HepG2 (cell line): ENCODE measurements at regions of chr20 and their contacts with region 1.

Region 1: DNA sequence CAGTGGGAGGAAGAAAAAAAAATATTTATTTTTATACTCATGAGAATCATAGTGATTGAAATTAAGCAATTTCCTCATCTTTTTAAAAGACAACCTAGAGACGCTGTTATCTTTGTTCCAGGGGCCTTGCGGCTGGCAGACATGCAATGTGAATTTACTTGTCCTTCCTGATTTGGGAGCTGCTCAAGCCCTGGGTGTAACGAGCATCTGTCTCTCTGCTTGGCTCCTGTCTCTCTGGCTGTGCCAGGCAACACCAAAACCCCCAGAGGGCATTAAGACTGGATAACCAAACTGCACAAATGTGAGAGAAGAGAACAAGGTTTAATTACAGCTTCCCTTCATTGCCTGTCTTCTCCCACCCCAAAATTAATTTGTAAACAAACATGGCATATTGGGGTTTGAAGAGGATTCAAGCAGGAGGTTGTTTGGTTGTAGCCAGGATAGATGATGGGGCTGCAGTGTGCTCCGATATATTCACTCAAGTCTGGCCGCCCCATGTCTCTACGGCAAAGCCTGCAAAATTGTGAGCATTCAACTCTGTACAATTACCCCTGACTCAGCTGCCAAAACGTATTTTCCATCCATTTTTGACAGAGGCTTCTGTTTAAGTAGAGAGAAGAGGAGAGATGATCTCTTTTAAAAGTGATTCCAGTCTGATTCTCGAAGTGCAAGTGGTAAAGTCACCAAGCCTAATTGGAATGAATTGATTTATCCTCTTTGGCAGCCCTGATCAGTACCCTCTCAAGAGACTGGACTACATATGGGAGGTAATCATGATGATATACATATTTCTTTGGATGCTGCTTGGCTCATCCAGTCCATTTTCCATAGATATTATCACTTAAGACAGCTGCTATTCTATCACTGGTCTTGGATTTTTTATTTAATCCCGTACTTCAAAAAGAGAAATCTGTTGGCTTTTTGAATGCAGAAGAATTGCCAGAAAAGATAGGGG is 170.2 kb downstream of the SLC24A3 start:
- DNase-seq: no peak
- ATAC-seq: no peak
- H3K4me3 ChIP-seq: no peak overlapping the region
- H3K27ac ChIP-seq: no peak overlapping the region
- H3K4me1 ChIP-seq: no peaks in the 10 kb centered on the region
- H3K27me3 ChIP-seq: no peaks in the 10 kb centered on the region
- CTCF ChIP-seq: no peak
- EP300 ChIP-seq: no peak
- POLR2A ChIP-seq: no peak
- RAD21 ChIP-seq: no peak

Region 2: DNA sequence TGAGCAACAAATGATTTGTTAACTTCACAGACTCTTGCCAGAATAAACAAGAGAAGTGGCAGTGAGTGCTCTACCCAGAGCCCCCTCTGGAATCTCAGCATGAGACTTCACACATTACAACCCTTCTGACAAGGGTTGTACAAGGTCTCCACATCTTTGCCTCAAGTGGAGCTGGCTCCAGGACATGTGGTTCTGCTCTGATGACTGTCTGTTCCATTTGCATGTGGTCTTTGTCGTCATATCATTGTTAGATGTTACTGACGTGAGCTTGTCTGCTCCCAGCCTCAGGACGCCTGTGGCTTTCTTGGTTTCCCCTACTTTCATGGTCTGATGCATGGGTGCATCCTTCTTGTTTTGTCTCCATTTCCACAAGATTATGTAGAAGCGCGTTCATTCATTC is 55.3 kb before region 1 on chr20:
- CTCF ChIA-PET with region 1: no interaction called
- POLR2A ChIA-PET with region 1: no interaction called
- in situ Hi-C with region 1: loop called (anchors 10 kb)
- intact Hi-C with region 1: no loop called
- DNase-seq: no peak
- ATAC-seq: no peak
- H3K4me3 ChIP-seq: no peak overlapping the region
- H3K27ac ChIP-seq: no peak overlapping the region
- H3K4me1 ChIP-seq: no peaks in the 10 kb centered on the region
- H3K27me3 ChIP-seq: 0 out of 5 replicates have a peak, but pooled peaks cover 0 to 4% of the 10 kb centered on the region in 2 experiments
- CTCF ChIP-seq: no peak
- EP300 ChIP-seq: no peak
- POLR2A ChIP-seq: no peak
- RAD21 ChIP-seq: no peak